T-cell (primary cell): ENCODE measurements at regions of chr6 and their contacts with region 1.

Region 1: DNA sequence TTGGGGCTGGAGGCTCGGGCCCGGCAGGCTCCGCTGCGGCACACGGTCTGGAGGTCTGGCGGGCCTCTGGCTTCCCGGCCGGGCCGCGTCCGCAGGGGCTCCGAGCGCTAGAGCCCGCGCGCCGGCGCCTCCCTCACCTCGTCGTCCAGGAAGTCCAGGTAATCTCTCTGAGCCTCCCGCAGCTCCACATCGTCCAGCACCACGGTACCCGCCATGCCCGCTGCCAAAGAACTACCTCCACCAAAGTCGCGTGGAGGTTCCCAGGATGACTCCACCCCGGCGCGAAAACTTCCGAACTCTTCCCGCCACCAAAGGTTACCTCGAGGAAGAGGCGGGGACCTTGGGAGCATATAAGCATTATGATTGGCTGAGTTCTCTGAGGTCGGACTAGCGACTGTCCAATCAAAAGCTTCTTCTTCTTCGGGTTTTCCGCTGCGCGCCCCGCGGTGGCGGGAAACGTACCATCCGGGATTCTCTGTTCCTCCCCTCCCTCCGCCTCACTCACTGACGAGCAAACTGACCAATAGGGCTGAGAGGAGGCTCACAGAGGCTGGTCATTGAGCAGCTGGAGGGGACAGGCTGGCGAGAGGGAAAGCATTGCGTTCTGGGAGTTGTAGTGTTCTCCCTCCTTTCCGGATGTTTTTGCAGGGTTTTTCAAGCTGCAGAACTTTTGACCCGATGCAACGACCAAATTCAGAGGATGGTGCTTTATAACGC is at the start of gene MCM3:
- DNase-seq: peak; percentile 85 to 98 (median 94)
- ATAC-seq: peak; percentile 95 to 98 (median 98)
- H3K4me3 ChIP-seq: peak within 1 kb of the TSS; percentile 69 to 90
- H3K4me3 Mint-ChIP-seq: peak within 1 kb of the TSS in 1 of 3 donors; percentile 70
- H3K27ac ChIP-seq: peak within 1 kb of the TSS; percentile 72
- H3K27ac Mint-ChIP-seq: peak within 1 kb of the TSS in 1 of 2 donors; percentile 28
- H3K4me1 ChIP-seq: peaks cover 27 to 34% of the 10 kb centered on the region in 2 experiments
- H3K4me1 Mint-ChIP-seq: peaks cover 37 to 54% (median 38%) of the 10 kb centered on the region in 3 donors
- H3K27me3 ChIP-seq: no peaks in the 10 kb centered on the region
- H3K27me3 Mint-ChIP-seq: no peaks in the 10 kb centered on the region
- total RNA-seq, gene MCM3: 22.9 to 52.1 (median 47.5) TPM

Region 2: GRCh38 chr6:52297433-52297832 is 12.8 kb after region 1 on chr6:
- CTCF ChIA-PET with region 1: interaction called, 3 to 19 read pairs
- POLR2A ChIA-PET with region 1: interaction called, 3 to 5 read pairs
- DNase-seq: peak in 1 of 35 experiments; percentile 22
- ATAC-seq: peak in 2 of 4 experiments; percentile 28 to 41
- H3K4me3 ChIP-seq: no peak overlapping the region
- H3K4me3 Mint-ChIP-seq: peak overlapping the region in 2 of 3 donors; percentile 65 to 69
- H3K27ac ChIP-seq: no peak overlapping the region
- H3K27ac Mint-ChIP-seq: peak overlapping the region; percentile 92 to 93
- H3K4me1 ChIP-seq: peaks cover 5 to 25% of the 10 kb centered on the region in 2 experiments
- H3K4me1 Mint-ChIP-seq: peaks cover 34 to 57% (median 51%) of the 10 kb centered on the region in 3 donors
- H3K27me3 ChIP-seq: no peaks in the 10 kb centered on the region
- H3K27me3 Mint-ChIP-seq: no peaks in the 10 kb centered on the region

Region 3: GRCh38 chr6:52361945-52362442 is 77.4 kb after region 1 on chr6 and contains the start of gene PAQR8:
- CTCF ChIA-PET with region 1: interaction called, 4 to 28 read pairs
- POLR2A ChIA-PET with region 1: interaction called in 1 of 2 experiments, 11 read pairs
- DNase-seq: peak; percentile 60 to 91 (median 78)
- ATAC-seq: peak; percentile 91 to 96 (median 93)
- H3K4me3 ChIP-seq: peak within 1 kb of the TSS; percentile 93 to 98
- H3K4me3 Mint-ChIP-seq: peak within 1 kb of the TSS; percentile 94 to 97 (median 95)
- H3K27ac ChIP-seq: peak within 1 kb of the TSS; percentile 94
- H3K27ac Mint-ChIP-seq: peak within 1 kb of the TSS; percentile 94
- H3K4me1 ChIP-seq: peaks cover 15 to 21% of the 10 kb centered on the region in 2 experiments
- H3K4me1 Mint-ChIP-seq: peaks cover 42 to 49% (median 46%) of the 10 kb centered on the region in 3 donors
- H3K27me3 ChIP-seq: no peaks in the 10 kb centered on the region
- H3K27me3 Mint-ChIP-seq: no peaks in the 10 kb centered on the region
- total RNA-seq, gene PAQR8: 12.0 to 35.2 (median 30.2) TPM

Region 4: GRCh38 chr6:52399511-52400312 is 115.1 kb after region 1 on chr6:
- CTCF ChIA-PET with region 1: interaction called, 11 to 91 read pairs
- POLR2A ChIA-PET with region 1: interaction called in 1 of 2 experiments, 6 read pairs
- DNase-seq: peak in 13 of 35 experiments; percentile 14 to 74 (median 36)
- ATAC-seq: peak; percentile 23 to 62 (median 40)
- H3K4me3 ChIP-seq: no peak overlapping the region
- H3K4me3 Mint-ChIP-seq: peak overlapping the region in 2 of 3 donors; percentile 40 to 68
- H3K27ac ChIP-seq: peak overlapping the region; percentile 89
- H3K27ac Mint-ChIP-seq: peak overlapping the region; percentile 89 to 96
- H3K4me1 ChIP-seq: peaks cover 59 to 64% of the 10 kb centered on the region in 2 experiments
- H3K4me1 Mint-ChIP-seq: peaks cover 79 to 83% (median 82%) of the 10 kb centered on the region in 3 donors
- H3K27me3 ChIP-seq: no peaks in the 10 kb centered on the region
- H3K27me3 Mint-ChIP-seq: no peaks in the 10 kb centered on the region

Region 5: GRCh38 chr6:52419809-52420670 is 135.4 kb after region 1 on chr6 and contains the start of gene EFHC1:
- CTCF ChIA-PET with region 1: interaction called, 4 to 6 read pairs
- POLR2A ChIA-PET with region 1: interaction called in 1 of 2 experiments, 17 read pairs
- DNase-seq: peak; percentile 93 to 99 (median 96)
- ATAC-seq: peak; percentile 91 to 95 (median 94)
- H3K4me3 ChIP-seq: peak within 1 kb of the TSS; percentile 60 to 67
- H3K4me3 Mint-ChIP-seq: no peak within 1 kb of the TSS
- H3K27ac ChIP-seq: peak within 1 kb of the TSS; percentile 62
- H3K27ac Mint-ChIP-seq: peak within 1 kb of the TSS in 1 of 2 donors; percentile 66
- H3K4me1 ChIP-seq: peaks cover 7 to 17% of the 10 kb centered on the region in 2 experiments
- H3K4me1 Mint-ChIP-seq: peaks cover 15 to 20% (median 15%) of the 10 kb centered on the region in 3 donors
- H3K27me3 ChIP-seq: peaks cover 0 to 8% of the 10 kb centered on the region in 2 experiments
- H3K27me3 Mint-ChIP-seq: no peaks in the 10 kb centered on the region
- total RNA-seq, gene EFHC1: 4.5 to 8.6 (median 6.2) TPM